ENCODE measurements at regions of chr6 and their contacts with region 1.

Region 1: DNA sequence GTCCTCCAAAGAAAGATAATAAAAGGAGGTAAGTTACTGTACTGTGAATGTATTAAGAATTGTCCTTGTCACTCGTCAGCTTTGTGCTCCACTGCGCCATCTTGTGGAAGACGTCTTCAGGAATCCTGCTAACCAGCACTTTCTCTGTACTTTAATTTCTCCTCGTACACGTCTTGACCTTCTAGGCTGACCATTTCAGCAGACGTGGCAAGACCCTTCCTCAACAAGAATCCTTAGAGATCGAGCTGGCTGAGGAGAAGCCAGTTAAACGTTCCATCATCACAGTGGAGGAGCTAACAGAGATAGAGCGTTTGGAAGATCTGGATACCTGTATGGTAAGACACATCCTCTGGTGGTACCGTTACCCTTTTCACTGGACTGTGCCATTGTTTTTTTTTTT is 95.5 kb upstream of the SCGN start:
- DNase-seq: peak; percentile 92
- H3K4me3 Mint-ChIP-seq: no peak overlapping the region
- H3K27ac Mint-ChIP-seq: no peak overlapping the region
- H3K4me1 Mint-ChIP-seq: no peaks in the 10 kb centered on the region
- H3K27me3 Mint-ChIP-seq: no peaks in the 10 kb centered on the region

Region 2: DNA sequence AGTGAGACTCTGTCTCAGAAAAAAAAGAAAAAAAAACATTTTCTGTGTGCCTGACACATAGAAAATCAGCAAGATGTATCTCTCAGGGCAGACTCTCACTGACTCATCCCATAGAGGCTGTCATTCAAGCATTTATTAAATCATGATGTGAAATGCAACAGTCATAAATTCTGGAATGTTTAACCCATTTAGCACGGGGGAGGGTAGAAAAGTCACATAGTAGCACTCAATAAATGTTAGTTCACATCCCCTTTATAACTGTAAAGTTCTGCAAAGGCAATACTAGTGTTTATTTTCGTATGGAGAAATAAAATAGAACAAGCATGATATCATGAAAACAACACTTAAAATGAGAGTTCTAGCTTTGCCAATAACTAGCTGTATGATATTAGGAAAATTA is 292.9 kb before region 1 on chr6:
- intact Hi-C with region 1: loop called (anchors 2 kb)
- DNase-seq: no peak
- H3K4me3 Mint-ChIP-seq: no peak overlapping the region
- H3K27ac Mint-ChIP-seq: no peak overlapping the region
- H3K4me1 Mint-ChIP-seq: no peaks in the 10 kb centered on the region
- H3K27me3 Mint-ChIP-seq: peaks cover 22% of the 10 kb centered on the region

Region 3: DNA sequence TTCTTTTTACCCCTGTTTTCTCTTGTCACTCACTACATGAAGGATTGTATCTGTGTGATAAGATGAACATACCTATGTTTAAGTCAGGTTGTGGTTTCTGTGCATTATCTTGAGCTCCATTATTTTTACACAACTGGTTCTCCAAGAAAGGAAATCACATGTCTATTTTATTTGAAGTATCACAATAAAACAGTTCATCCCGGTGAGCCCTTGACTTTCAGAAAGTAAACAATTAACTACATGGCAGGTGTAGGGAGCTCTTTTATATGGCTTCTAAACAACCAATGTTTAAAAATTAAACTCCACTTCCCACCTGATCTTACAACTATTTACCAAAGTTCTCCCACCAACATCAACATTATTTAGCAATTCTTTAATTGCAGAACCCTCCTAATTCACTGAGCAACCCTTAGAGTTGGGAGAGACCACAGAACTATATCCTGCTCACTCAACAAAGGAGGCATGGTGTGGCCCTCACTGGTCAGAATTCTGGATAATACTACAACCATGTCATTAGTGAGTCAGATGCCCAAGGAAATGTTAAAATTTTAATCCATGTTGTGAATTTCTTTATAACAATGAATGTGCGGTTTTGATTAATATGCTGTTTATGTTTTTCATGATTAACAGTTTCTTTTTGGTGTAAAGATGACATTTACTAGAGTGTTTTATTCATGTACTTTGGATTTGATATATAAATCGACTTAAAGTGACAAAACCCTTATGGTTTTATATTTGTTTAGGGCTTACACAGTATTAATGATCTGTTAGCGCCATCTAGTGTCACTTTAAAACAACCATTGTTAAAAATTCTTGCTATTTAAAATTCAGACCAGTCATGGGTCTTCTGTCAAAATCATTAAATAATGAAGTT is 45.5 kb after region 1 on chr6:
- intact Hi-C with region 1: loop called (anchors 5 kb)
- DNase-seq: no peak
- H3K4me3 Mint-ChIP-seq: no peak overlapping the region
- H3K27ac Mint-ChIP-seq: no peak overlapping the region
- H3K4me1 Mint-ChIP-seq: peaks cover 2% of the 10 kb centered on the region
- H3K27me3 Mint-ChIP-seq: no peaks in the 10 kb centered on the region

Region 4: GRCh38 chr6:25788305-25788922 is 231.9 kb after region 1 on chr6:
- intact Hi-C with region 1: no loop called
- DNase-seq: peak; percentile 82
- H3K4me3 Mint-ChIP-seq: no peak overlapping the region
- H3K27ac Mint-ChIP-seq: no peak overlapping the region
- H3K4me1 Mint-ChIP-seq: no peaks in the 10 kb centered on the region
- H3K27me3 Mint-ChIP-seq: no peaks in the 10 kb centered on the region